ENCODE measurements at regions of chr15 and their contacts with region 1.

Region 1: GRCh38 chr15:83248151-83249029 is 36.1 kb downstream of the BNC1 start:
- DNase-seq: no peak
- H3K4me3 Mint-ChIP-seq: no peak overlapping the region
- H3K27ac Mint-ChIP-seq: no peak overlapping the region
- H3K4me1 Mint-ChIP-seq: no peaks in the 10 kb centered on the region
- H3K27me3 Mint-ChIP-seq: peaks cover 17% of the 10 kb centered on the region

Region 2: GRCh38 chr15:83230258-83230657 is 18.1 kb before region 1 on chr15:
- CTCF ChIA-PET with region 1: interaction called, 10 read pairs
- POLR2A ChIA-PET with region 1: no interaction called
- intact Hi-C with region 1: no loop called
- DNase-seq: no peak
- H3K4me3 Mint-ChIP-seq: no peak overlapping the region
- H3K27ac Mint-ChIP-seq: no peak overlapping the region
- H3K4me1 Mint-ChIP-seq: no peaks in the 10 kb centered on the region
- H3K27me3 Mint-ChIP-seq: no peaks in the 10 kb centered on the region

Region 3: GRCh38 chr15:83380682-83381081 is 132.3 kb after region 1 on chr15:
- CTCF ChIA-PET with region 1: interaction called, 5 read pairs
- POLR2A ChIA-PET with region 1: no interaction called
- intact Hi-C with region 1: loop called (anchors 1 kb)
- DNase-seq: peak; percentile 55
- H3K4me3 Mint-ChIP-seq: no peak overlapping the region
- H3K27ac Mint-ChIP-seq: no peak overlapping the region
- H3K4me1 Mint-ChIP-seq: no peaks in the 10 kb centered on the region
- H3K27me3 Mint-ChIP-seq: peaks cover 31% of the 10 kb centered on the region

Region 4: GRCh38 chr15:83436458-83437158 is 188.2 kb after region 1 on chr15:
- CTCF ChIA-PET with region 1: interaction called, 18 read pairs
- POLR2A ChIA-PET with region 1: no interaction called
- intact Hi-C with region 1: loop called (anchors 1 kb)
- DNase-seq: no peak
- H3K4me3 Mint-ChIP-seq: no peak overlapping the region
- H3K27ac Mint-ChIP-seq: no peak overlapping the region
- H3K4me1 Mint-ChIP-seq: peaks cover 2% of the 10 kb centered on the region
- H3K27me3 Mint-ChIP-seq: peaks cover 7% of the 10 kb centered on the region

Region 5: GRCh38 chr15:83559310-83559966 is 311.0 kb after region 1 on chr15:
- CTCF ChIA-PET with region 1: interaction called, 35 read pairs
- POLR2A ChIA-PET with region 1: no interaction called
- intact Hi-C with region 1: no loop called
- DNase-seq: peak; percentile 57
- H3K4me3 Mint-ChIP-seq: no peak overlapping the region
- H3K27ac Mint-ChIP-seq: no peak overlapping the region
- H3K4me1 Mint-ChIP-seq: no peaks in the 10 kb centered on the region
- H3K27me3 Mint-ChIP-seq: peaks cover 10% of the 10 kb centered on the region

Region 6: DNA sequence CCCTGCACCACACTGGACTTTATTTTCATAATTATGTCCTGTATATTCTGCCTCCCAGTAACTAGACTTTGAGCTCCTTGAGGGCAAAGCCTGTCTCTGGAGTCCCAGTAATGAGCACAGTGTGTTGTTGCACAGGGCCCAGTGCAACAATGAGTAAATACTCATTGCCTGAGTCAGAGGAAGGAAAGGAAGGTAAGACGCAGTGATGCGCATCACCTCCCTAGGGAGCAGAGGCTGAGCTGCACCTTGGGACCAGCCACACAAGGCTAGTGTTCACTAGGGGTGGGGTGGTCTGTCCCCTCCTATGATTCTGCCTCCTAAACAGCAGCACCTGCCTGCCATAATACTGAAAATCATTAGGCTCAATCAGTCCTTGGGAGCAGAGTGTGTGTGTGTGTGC is 318.9 kb after region 1 on chr15:
- CTCF ChIA-PET with region 1: interaction called, 35 read pairs
- POLR2A ChIA-PET with region 1: no interaction called
- intact Hi-C with region 1: no loop called
- DNase-seq: no peak
- H3K4me3 Mint-ChIP-seq: no peak overlapping the region
- H3K27ac Mint-ChIP-seq: no peak overlapping the region
- H3K4me1 Mint-ChIP-seq: no peaks in the 10 kb centered on the region
- H3K27me3 Mint-ChIP-seq: peaks cover 3% of the 10 kb centered on the region